Head of caudate nucleus (tissue), 42 donors: ENCODE measurements at regions of chr18 and their contacts with region 1.

Region 1: DNA sequence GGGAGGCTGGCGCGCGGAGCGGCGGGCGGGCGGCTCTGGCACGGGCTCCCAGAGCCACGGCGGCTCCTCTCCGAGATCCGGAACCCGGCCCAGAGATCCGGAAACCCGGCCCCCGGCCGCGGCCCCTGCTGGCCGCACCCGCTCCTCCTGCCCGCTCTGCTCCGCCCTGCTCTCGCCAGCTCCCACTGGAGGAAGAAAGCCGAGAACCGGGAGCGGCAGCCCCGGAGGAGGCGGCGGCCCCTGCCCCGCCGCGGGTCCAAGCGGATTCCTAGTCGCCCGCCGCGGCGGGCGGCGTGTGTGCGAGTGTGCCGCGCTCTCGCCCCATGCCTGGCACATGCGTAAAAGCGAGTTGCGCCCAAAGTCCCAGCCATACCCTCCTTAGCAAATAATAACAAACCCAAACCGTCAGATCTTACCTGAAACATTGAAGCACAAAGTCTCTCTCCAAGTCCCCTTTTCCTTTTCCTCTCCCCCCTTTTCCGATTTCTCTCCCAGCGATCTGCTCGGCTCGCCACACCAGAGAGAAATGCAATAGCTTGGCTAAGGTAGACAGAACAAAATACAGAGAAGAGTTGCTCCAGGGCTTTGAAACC is 108.7 kb upstream of the KCTD1 start:
- DNase-seq: peak in 41 of 42 donors; percentile 42 to 91 (median 81)

Region 2: GRCh38 chr18:26405190-26405801 is 251.7 kb before region 1 on chr18:
- intact Hi-C with region 1: loop called (anchors 10 kb)
- DNase-seq: peak in 41 of 42 donors; percentile 36 to 83 (median 61)

Region 3: DNA sequence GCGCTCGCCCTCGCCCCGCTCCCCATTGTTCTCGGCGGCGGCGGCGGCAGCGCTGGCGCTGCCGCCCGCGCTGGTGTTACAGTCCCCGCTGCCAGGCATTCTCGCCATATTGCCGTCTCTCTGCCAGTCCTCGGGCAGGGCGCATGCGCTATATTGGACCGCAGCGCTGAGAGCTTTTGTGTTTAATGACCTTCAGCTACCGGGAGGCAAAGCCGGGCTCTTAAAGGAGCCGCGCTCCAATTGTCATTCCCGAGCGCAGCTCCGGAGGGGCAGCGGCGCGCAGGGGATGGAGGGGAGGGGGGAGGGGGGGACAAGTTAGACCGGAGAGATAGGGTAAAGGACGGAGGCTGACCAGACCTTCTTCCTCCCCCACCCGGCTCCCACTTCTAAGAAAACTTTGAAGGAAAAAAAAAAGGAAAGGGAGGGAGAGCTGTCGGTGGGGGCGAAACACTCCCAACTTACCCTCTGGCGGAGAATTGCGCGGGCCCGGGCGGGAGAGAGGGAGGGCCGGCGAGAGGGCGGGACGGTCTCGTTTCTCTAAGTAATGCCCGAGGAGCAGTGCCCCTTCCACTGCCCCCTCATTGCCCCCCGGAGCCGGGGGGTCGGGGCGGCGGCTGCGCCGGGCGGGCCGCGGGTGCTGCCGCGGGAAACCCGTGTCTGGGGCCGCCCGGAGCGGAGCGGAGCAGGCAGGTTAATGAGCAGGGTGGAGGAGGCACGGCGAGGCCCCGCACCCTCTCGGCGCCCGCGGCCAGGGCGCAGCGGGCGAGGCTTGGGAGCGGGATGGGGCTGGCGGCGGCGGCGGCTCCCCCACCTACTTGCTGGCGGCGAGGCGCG is 108.4 kb before region 1 on chr18 and contains the start of gene KCTD1:
- intact Hi-C with region 1: loop called (anchors 5 kb)
- DNase-seq: peak; percentile 55 to 92 (median 80)

Region 4: DNA sequence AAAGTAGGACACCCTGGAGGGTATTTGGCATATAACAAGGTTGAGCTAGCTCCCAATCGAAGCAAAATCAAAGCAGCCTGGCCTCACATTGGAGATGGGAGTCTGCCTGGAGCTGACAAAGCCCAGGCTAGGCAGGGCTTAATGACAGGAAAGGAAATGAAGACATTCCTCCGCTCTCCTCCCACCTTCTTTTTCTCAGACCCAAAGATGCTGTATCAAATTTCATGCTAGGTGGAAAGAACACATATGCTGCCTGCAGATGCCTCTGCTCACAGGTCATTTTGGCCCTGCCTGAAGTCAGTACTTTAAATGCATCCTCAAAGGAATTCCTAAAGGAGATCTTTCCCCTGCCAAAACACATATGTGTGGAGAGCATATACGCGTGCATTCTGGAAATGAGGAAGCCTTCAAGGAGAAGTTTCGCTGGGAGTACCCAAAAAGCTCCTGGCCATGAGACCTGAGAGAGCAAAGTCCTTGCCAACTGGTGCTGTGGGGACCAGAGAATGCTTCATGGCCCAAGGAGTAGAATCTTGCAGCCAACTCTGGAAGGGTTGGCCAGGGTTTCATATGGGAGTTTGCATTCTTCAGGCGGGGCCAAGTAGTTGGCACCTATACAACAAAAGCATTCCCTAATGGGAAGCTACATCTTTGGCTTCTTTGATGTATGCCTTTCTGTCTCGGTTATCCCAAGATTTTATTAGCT is 120.5 kb after region 1 on chr18:
- intact Hi-C with region 1: no loop called
- DNase-seq: peak in 2 of 42 donors; percentile 17 to 36